Activated CD4-positive, alpha-beta T cell treated with anti-CD3 and anti-CD28 coated beads for 36 hours (primary cell): ENCODE measurements at regions of chr9 and their contacts with region 1.

Region 1: GRCh38 chr9:120842690-120843499 is at the start of gene PSMD5:
- DNase-seq: peak; percentile 99
- ATAC-seq: peak; percentile 89
- H3K4me3 Mint-ChIP-seq: peak within 1 kb of the TSS; percentile 98
- H3K27ac Mint-ChIP-seq: peak within 1 kb of the TSS; percentile 91
- H3K4me1 Mint-ChIP-seq: peaks cover 70% of the 10 kb centered on the region
- H3K27me3 Mint-ChIP-seq: no peaks in the 10 kb centered on the region
- total RNA-seq, gene PSMD5: 53.5 to 58.3 TPM

Region 2: DNA sequence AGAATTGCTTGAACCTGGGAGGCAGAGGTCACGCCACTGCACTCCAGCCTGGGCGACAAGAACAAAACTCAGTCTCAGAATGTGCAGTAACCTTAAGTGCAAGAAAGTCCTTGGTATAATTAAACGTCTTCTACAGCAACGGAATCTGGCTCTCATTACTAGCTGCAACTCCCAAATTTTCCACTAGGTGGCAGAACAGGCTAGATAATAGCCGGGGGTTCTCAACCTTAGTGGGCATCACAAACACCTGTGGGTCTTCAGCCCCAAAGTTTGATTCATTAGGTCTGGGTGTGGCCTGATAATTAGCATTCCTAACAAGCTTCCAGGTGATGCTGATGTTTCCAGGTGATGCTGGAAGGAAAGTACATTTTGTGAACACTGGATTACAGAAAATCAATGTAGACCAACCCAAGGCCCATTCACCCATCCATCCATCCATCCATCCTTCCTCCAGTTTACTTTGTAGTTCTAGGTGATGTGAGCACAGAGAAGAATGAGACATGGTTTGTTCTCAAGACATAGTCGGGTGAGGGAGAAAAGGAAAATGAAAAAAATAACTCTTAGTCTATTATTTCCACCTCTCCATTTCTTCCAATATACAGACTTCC is 87.0 kb before region 1 on chr9:
- CTCF ChIA-PET with region 1: interaction called, 4 read pairs
- POLR2A ChIA-PET with region 1: interaction called, 3 read pairs
- intact Hi-C with region 1: loop called in 1 of 2 experiments (anchors 5 kb)
- DNase-seq: peak; percentile 74
- ATAC-seq: peak; percentile 73
- H3K4me3 Mint-ChIP-seq: no peak overlapping the region
- H3K27ac Mint-ChIP-seq: peak overlapping the region; percentile 68
- H3K4me1 Mint-ChIP-seq: peaks cover 27% of the 10 kb centered on the region
- H3K27me3 Mint-ChIP-seq: no peaks in the 10 kb centered on the region

Region 3: DNA sequence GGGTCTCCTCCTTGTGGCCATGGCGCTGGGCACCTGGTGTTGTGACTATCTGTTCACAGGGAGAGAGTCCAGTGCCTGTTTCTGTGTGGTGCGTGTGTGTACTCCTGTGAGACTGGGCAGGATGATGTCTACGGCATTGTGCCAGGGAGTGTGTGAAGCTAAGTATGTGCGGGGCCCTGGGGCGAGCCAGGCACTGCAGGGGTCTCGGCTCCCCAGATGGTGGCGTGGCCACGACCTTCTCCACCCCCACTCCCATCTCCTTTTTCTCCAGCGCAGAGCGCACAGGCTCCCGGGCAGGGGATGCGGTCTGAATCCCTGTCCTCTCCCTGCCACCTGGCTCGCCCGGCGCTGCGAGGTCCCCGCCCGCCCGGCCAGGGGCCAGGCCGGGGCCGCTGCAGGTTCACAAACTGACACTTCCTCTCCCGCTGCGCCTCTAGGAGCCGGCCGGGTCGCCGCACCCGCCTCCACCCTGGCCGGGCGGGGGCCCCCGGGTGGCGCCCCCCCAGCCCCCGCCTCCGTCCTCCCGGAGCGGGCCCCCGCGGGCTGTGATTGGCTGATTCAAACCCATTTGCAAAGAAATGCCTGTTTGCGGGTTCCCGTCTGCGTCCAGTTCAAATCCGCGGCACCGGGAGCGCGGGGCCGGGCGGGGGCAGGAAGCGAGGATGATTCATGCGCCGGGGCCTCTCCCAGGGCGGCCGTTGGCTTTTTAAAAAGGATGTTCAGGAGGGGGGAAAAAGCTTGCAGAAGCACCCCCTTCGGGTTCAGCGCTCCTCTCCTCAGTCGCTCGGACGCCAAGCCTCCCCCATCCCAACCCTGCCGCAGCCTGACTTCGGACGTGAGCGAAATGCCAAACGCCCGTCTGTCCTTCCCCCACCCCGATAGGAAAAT is 33.3 kb after region 1 on chr9:
- CTCF ChIA-PET with region 1: interaction called, 3 read pairs
- POLR2A ChIA-PET with region 1: interaction called, 5 read pairs
- intact Hi-C with region 1: loop called (anchors 1 kb)
- DNase-seq: peak; percentile 95
- ATAC-seq: peak; percentile 59
- H3K4me3 Mint-ChIP-seq: peak overlapping the region; percentile 85
- H3K27ac Mint-ChIP-seq: peak overlapping the region; percentile 94
- H3K4me1 Mint-ChIP-seq: peaks cover 73% of the 10 kb centered on the region
- H3K27me3 Mint-ChIP-seq: no peaks in the 10 kb centered on the region

Region 4: DNA sequence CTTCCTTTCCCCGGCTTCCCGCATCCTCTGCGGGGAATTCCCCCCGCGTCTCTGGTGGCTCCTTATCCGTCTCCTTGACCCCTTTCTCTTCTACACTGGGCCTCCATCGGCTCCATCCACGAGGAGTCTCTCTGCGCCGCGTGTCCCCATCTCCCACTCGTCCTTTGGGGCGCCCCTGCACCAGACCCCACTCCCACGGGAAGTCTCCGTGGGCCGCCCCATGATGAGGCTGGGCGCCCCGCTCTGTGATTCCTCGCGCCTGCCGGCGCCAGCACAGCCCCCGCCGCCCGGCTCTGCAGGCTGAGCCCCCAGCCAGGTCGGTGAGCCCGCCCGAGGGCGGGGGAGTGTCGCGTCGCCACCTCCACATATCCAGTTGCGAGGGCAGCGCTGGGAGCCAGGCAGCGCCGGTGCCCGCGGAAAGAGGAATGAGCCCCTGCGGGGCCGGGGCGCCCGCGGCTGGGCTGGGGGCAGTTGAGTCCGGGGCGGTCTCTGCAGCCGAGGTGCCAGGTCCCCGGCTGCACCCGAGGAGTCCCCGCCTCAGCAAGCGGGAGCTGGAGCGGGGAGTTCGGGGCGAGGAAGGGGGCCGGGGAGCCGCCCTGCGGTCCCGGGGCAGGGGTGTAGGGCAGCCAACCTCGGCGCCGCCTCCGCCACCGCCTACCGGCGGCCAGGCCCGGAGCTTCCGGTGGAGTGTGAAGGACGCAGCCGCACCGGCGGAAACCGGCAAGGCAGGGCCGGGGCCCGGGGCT is 85.8 kb after region 1 on chr9:
- CTCF ChIA-PET with region 1: interaction called, 7 read pairs
- POLR2A ChIA-PET with region 1: interaction called, 40 read pairs
- intact Hi-C with region 1: loop called (anchors 1 kb)
- DNase-seq: peak; percentile 85
- ATAC-seq: peak; percentile 16
- H3K4me3 Mint-ChIP-seq: peak overlapping the region; percentile 90
- H3K27ac Mint-ChIP-seq: peak overlapping the region; percentile 90
- H3K4me1 Mint-ChIP-seq: peaks cover 75% of the 10 kb centered on the region
- H3K27me3 Mint-ChIP-seq: no peaks in the 10 kb centered on the region

Region 5: DNA sequence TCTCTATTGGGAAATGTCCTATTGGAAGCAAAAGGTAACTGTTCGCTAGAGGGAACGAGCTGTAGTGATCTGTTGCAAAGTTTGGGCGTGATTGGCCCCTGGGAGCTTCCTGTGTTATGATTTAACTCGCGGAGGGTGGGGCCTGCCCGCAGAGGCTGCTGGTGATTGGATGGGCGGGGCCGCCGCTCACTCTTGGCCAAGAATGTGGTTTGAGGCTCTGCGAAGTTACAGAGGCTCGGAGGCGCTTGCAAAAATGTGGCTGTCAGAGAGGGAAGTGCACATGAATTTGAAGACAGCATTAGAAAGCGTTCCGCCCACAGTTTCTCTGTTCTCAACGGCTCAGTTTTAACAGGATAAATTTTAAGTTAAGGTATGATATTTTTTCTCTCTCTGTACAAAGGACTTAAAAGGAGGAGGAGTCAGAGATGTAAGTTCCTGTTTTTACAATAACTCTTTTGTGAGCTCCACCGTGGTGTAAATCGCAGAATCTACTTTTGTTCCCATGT is 278.7 kb after region 1 on chr9:
- CTCF ChIA-PET with region 1: interaction called, 4 read pairs
- POLR2A ChIA-PET with region 1: interaction called, 6 read pairs
- intact Hi-C with region 1: loop called in 1 of 2 experiments (anchors 2 kb)
- DNase-seq: peak; percentile 98
- ATAC-seq: peak; percentile 99
- H3K4me3 Mint-ChIP-seq: peak overlapping the region; percentile 79
- H3K27ac Mint-ChIP-seq: peak overlapping the region; percentile 90
- H3K4me1 Mint-ChIP-seq: peaks cover 51% of the 10 kb centered on the region
- H3K27me3 Mint-ChIP-seq: no peaks in the 10 kb centered on the region